ENCODE measurements at regions of chr17 and their contacts with region 1.

Region 1: DNA sequence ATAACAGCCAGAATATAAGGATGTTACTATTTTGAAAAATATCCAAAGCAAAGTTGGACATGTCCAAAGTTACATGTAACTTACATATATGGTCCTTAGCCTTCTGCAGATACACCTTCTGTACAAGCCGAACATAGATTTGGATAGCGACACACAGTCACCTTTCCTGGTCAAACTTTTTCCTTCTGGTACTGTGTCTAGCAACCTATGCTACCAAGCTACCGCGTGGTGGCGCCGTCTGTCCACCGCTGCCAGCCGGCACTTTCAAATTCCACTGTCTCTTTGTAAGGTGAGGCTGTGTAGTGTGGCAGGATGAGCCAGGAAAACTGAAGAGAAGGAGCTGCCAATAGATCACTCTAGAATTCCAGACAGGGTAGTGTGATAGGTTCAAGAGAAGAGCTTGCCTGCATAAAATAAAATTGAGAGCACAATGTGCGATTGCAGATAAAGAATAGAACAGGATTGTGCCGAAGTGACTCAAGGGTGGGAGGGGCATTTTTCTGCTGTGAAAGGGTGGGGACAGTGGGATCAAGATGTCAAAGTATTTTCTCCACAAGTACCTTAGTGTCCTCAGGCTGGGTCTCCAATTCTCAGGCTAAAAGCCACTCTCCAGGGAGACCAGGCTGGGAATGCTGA is 366.9 kb downstream of the SLC39A11 start:
- DNase-seq: peak; percentile 69
- ATAC-seq: peak; percentile 32
- H3K4me3 Mint-ChIP-seq: no peak overlapping the region
- H3K27ac Mint-ChIP-seq: peak overlapping the region; percentile 58
- H3K4me1 Mint-ChIP-seq: peaks cover 48% of the 10 kb centered on the region
- H3K27me3 Mint-ChIP-seq: no peaks in the 10 kb centered on the region

Region 2: DNA sequence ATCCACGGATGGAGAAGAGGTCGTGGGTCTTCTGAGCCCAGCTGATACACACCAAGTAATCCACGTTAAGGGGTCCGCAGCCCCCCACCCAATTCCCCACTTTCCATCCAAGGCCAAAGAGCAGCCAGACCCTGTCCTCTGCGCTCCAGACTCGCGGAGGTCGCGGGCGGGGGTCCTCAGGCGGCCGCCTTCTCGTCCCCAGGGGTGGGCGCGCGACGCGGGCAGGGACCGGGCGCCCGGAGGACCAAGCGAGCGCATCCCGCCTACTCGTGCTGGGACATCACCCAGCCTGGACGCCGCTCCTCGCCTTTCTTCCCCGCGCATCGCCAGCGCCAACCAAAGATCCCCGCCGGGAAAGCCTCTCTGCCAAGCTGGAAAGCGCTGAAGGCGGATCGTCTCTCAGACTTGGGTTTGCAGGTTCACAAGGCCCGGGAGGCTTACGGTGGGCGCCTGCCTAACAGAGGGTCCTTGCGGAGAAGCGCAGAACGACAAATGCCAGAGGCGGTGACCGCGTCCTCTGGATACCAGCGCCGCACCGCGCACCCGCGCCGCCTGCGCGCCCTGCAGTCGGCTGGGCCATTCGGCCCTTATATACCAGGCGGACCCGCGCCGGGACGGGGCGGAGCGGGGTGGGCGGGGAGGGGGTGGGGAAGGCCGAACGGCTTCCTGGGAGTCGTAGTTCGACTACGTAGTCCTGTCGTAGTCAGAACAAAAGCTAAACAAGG is 133.1 kb before region 1 on chr17:
- CTCF ChIA-PET with region 1: interaction called, 15 read pairs
- DNase-seq: peak; percentile 76
- ATAC-seq: peak; percentile 89
- H3K4me3 Mint-ChIP-seq: peak overlapping the region; percentile 79
- H3K27ac Mint-ChIP-seq: peak overlapping the region; percentile 20
- H3K4me1 Mint-ChIP-seq: peaks cover 31% of the 10 kb centered on the region
- H3K27me3 Mint-ChIP-seq: peaks cover 74% of the 10 kb centered on the region

Region 3: DNA sequence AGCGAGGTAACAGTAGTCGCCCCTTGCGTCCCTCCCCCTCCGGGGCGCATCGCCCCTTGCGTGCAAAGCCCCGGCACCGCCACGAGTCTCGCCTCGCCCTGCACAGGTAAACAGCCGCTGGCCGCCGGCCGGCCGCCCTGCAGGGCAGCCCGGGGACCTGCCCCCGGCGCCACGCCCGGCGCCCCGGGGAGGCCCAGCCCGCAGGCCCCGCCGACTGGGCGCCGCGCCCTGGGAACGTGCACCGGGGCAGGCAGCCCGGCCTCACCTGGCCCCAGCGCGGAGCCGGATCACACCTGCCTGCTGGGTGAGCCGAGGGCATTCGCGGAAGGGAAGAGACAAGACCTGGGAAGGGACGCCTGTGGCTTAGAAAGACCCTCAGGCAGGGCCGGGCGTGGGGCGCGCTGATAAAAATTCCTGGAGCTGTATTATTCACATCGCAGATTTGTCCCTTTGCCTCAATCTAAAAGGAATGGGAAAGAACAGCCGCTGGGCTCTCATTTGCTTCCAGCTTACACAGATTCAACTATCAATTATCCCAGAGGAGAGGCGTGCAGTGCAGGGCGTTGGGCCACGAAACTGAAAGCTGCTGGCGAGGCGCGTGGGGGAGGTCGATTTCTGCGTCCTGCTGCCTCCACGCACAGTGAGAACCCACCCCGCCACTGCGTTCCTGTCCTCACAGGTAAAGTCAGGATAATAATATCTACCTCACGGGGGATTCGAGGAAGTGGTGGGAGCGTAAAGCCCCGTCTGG is 85.0 kb before region 1 on chr17:
- CTCF ChIA-PET with region 1: no interaction called
- DNase-seq: no peak
- ATAC-seq: no peak
- H3K4me3 Mint-ChIP-seq: no peak overlapping the region
- H3K27ac Mint-ChIP-seq: no peak overlapping the region
- H3K4me1 Mint-ChIP-seq: no peaks in the 10 kb centered on the region
- H3K27me3 Mint-ChIP-seq: peaks cover 5% of the 10 kb centered on the region

Region 4: GRCh38 chr17:72705905-72706395 is 19.6 kb before region 1 on chr17:
- CTCF ChIA-PET with region 1: interaction called, 19 read pairs
- DNase-seq: no peak
- ATAC-seq: peak; percentile 33
- H3K4me3 Mint-ChIP-seq: no peak overlapping the region
- H3K27ac Mint-ChIP-seq: peak overlapping the region; percentile 72
- H3K4me1 Mint-ChIP-seq: peaks cover 30% of the 10 kb centered on the region
- H3K27me3 Mint-ChIP-seq: no peaks in the 10 kb centered on the region

Region 5: GRCh38 chr17:73156166-73156840 is 430.8 kb after region 1 on chr17:
- CTCF ChIA-PET with region 1: interaction called, 70 read pairs
- DNase-seq: peak; percentile 65
- ATAC-seq: peak; percentile 92
- H3K4me3 Mint-ChIP-seq: no peak overlapping the region
- H3K27ac Mint-ChIP-seq: no peak overlapping the region
- H3K4me1 Mint-ChIP-seq: peaks cover 6% of the 10 kb centered on the region
- H3K27me3 Mint-ChIP-seq: peaks cover 25% of the 10 kb centered on the region

Region 6: GRCh38 chr17:73192894-73193701 is 467.5 kb after region 1 on chr17 and contains the start of gene COG1:
- CTCF ChIA-PET with region 1: interaction called, 85 read pairs
- DNase-seq: peak; percentile 91
- ATAC-seq: peak; percentile 84
- H3K4me3 Mint-ChIP-seq: peak within 1 kb of the TSS; percentile 92
- H3K27ac Mint-ChIP-seq: peak within 1 kb of the TSS; percentile 97
- H3K4me1 Mint-ChIP-seq: peaks cover 23% of the 10 kb centered on the region
- H3K27me3 Mint-ChIP-seq: no peaks in the 10 kb centered on the region
- total RNA-seq, gene COG1: 26.6 to 33.9 TPM

Region 7: GRCh38 chr17:73255671-73256181 is 530.2 kb after region 1 on chr17:
- CTCF ChIA-PET with region 1: interaction called, 38 read pairs
- DNase-seq: peak; percentile 62
- ATAC-seq: peak; percentile 84
- H3K4me3 Mint-ChIP-seq: no peak overlapping the region
- H3K27ac Mint-ChIP-seq: no peak overlapping the region
- H3K4me1 Mint-ChIP-seq: no peaks in the 10 kb centered on the region
- H3K27me3 Mint-ChIP-seq: no peaks in the 10 kb centered on the region